ENCODE measurements at regions of chr17 and their contacts with region 1.

Region 1: DNA sequence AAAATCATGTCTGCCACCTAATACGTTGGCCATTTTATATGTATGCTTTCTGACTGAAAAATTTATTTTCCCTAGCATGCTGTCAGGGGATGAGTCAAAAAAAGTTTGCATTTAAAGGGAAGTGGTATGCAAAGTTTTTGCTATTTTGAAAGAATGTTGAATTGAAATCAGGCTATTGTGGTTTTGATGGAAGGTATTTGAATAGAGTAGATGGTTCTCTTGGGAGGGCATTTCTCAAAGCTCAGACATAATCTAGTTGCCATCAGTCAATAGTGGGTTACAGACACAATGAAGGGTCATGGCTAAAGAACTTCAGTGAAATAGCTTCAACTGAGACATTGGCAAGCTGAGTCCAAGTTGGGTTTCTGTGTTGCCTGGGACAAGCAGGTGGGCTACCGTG is 102.4 kb downstream of the MAP2K6 start:
- DNase-seq: no peak
- H3K4me3 ChIP-seq: no peak overlapping the region
- H3K27me3 ChIP-seq: no peaks in the 10 kb centered on the region
- CTCF ChIP-seq: no peak

Region 2: GRCh38 chr17:69501591-69502468 is 15.1 kb before region 1 on chr17:
- CTCF ChIA-PET with region 1: interaction called, 6 read pairs
- POLR2A ChIA-PET with region 1: interaction called, 10 read pairs
- DNase-seq: peak; percentile 29
- H3K4me3 ChIP-seq: peak overlapping the region; percentile 12
- H3K27me3 ChIP-seq: no peaks in the 10 kb centered on the region
- CTCF ChIP-seq: 0 out of 2 replicates have a peak, but pooled peaks have one; percentile 13

Region 3: GRCh38 chr17:69607162-69607834 is 90.4 kb after region 1 on chr17:
- CTCF ChIA-PET with region 1: no interaction called
- POLR2A ChIA-PET with region 1: no interaction called
- DNase-seq: no peak
- H3K4me3 ChIP-seq: no peak overlapping the region
- H3K27me3 ChIP-seq: no peaks in the 10 kb centered on the region
- CTCF ChIP-seq: peak; percentile 86

Measured in BJ (cell line).